HepG2 (cell line): ENCODE measurements at regions of chr5 and their contacts with region 1.

Region 1: DNA sequence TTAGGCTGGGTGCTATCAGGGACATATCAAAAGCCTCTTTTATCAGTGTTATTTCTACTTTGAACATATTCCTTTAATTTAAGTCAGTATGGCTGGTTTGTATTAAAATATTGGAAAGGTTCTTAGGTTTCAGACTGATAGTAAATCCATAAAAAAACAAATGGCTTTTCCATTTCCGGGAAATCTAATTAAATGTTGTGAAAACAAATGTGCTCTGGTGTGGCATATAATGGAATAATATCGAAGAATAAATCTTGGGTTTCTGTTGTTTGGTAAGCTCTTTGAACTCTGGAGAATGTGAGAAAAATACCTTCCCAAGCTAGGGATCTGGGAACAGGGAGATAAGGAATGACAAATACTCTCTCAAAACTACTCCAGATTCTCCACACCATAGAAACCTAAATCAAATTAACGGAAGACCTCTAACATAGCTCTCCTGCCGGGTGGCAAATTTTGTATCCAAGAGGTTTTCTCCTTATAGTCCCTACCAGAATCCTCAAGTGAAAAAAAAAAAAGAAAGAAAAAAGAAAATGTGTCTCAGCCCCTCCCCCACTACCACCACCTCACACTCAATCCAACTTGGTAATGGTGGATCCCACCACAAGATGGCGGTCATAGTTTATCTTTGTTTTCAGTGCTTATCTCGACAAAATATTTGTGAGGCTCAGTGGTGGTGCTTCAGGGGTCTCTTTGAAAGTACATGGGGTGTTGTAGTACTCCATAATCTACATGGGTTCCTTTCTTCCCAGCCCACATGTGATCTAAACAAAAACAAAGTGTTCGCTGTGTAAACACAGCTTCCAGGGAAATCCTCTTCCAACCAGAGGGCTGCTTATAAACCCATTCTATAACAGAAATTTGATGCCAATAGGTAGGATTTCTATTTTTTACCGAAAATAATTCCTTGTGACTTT is 54.6 kb upstream of the FST start:
- DNase-seq: peak; percentile 67
- ATAC-seq: peak; percentile 89
- H3K4me3 ChIP-seq: peak overlapping the region in 1 of 3 experiments; percentile 9; a peak in 1 of 6 replicates
- H3K27ac ChIP-seq: no peak overlapping the region
- H3K4me1 ChIP-seq: peaks cover 33% of the 10 kb centered on the region
- H3K27me3 ChIP-seq: no peaks in the 10 kb centered on the region
- CTCF ChIP-seq: peak; percentile 86
- EP300 ChIP-seq: no peak
- POLR2A ChIP-seq: no peak
- RAD21 ChIP-seq: peak; percentile 68; the same call in 1 of the 2 replicates

Region 2: GRCh38 chr5:52043543-52043942 is 1382.3 kb before region 1 on chr5:
- CTCF ChIA-PET with region 1: no interaction called
- POLR2A ChIA-PET with region 1: no interaction called
- in situ Hi-C with region 1: no loop called
- intact Hi-C with region 1: no loop called
- DNase-seq: no peak
- ATAC-seq: no peak
- H3K4me3 ChIP-seq: no peak overlapping the region
- H3K27ac ChIP-seq: no peak overlapping the region
- H3K4me1 ChIP-seq: no peaks in the 10 kb centered on the region
- H3K27me3 ChIP-seq: no peaks in the 10 kb centered on the region
- CTCF ChIP-seq: no peak
- EP300 ChIP-seq: no peak
- POLR2A ChIP-seq: no peak
- RAD21 ChIP-seq: no peak

Region 3: GRCh38 chr5:52787600-52788504 is 638.0 kb before region 1 on chr5 and contains the starts of genes ITGA1 and PELO:
- CTCF ChIA-PET with region 1: no interaction called
- POLR2A ChIA-PET with region 1: no interaction called
- in situ Hi-C with region 1: no loop called
- intact Hi-C with region 1: no loop called
- DNase-seq: peak; percentile 86
- ATAC-seq: peak; percentile 92
- H3K4me3 ChIP-seq: peak within 1 kb of the TSS; percentile 76 to 92 (median 77)
- H3K27ac ChIP-seq: peak within 1 kb of the TSS; percentile 73
- H3K4me1 ChIP-seq: peaks cover 48% of the 10 kb centered on the region
- H3K27me3 ChIP-seq: no peaks in the 10 kb centered on the region; a peak in 1 of 5 replicates
- CTCF ChIP-seq: peak; percentile 86
- EP300 ChIP-seq: no peak; a peak in 1 of 4 replicates
- POLR2A ChIP-seq: peak; percentile 35 to 61; a peak in 3 of 4 replicates
- RAD21 ChIP-seq: peak; percentile 90
- total RNA-seq, gene ITGA1: 11.6 and 23.1 TPM in 2 replicates
- total RNA-seq, gene PELO: 19.0 and 19.5 TPM in 2 replicates

Region 4: GRCh38 chr5:53170748-53171349 is 255.0 kb before region 1 on chr5:
- CTCF ChIA-PET with region 1: no interaction called
- POLR2A ChIA-PET with region 1: no interaction called
- in situ Hi-C with region 1: no loop called
- intact Hi-C with region 1: loop called (anchors 5 kb)
- DNase-seq: peak; percentile 23
- ATAC-seq: peak; percentile 72
- H3K4me3 ChIP-seq: no peak overlapping the region
- H3K27ac ChIP-seq: no peak overlapping the region
- H3K4me1 ChIP-seq: no peaks in the 10 kb centered on the region
- H3K27me3 ChIP-seq: no peaks in the 10 kb centered on the region; a peak in 2 of 5 replicates
- CTCF ChIP-seq: peak; percentile 74
- EP300 ChIP-seq: no peak
- POLR2A ChIP-seq: no peak
- RAD21 ChIP-seq: peak; percentile 38; the same call in 1 of the 2 replicates

Region 5: GRCh38 chr5:53478411-53479044 is 52.7 kb after region 1 on chr5:
- CTCF ChIA-PET with region 1: no interaction called
- POLR2A ChIA-PET with region 1: interaction called, 12 read pairs
- in situ Hi-C with region 1: no loop called
- intact Hi-C with region 1: loop called (anchors 1 kb)
- DNase-seq: peak; percentile 79
- ATAC-seq: peak; percentile 4
- H3K4me3 ChIP-seq: peak overlapping the region; percentile 65 to 95 (median 84)
- H3K27ac ChIP-seq: peak overlapping the region; percentile 98
- H3K4me1 ChIP-seq: peaks cover 55% of the 10 kb centered on the region
- H3K27me3 ChIP-seq: peaks cover 0 to 5% of the 10 kb centered on the region in 2 experiments; a peak in 1 of 5 replicates
- CTCF ChIP-seq: peak; percentile 74
- EP300 ChIP-seq: peak in 1 of 2 experiments; percentile 48; a peak in 1 of 4 replicates
- POLR2A ChIP-seq: peak; percentile 48 to 64
- RAD21 ChIP-seq: peak; percentile 35; the same call in 1 of the 2 replicates

Region 6: GRCh38 chr5:53874409-53874808 is 448.6 kb after region 1 on chr5:
- CTCF ChIA-PET with region 1: interaction called, 3 read pairs
- POLR2A ChIA-PET with region 1: no interaction called
- in situ Hi-C with region 1: no loop called
- intact Hi-C with region 1: loop called (anchors 1 kb)
- DNase-seq: no peak
- ATAC-seq: peak; percentile 91
- H3K4me3 ChIP-seq: no peak overlapping the region
- H3K27ac ChIP-seq: no peak overlapping the region
- H3K4me1 ChIP-seq: peaks cover 12% of the 10 kb centered on the region
- H3K27me3 ChIP-seq: no peaks in the 10 kb centered on the region
- CTCF ChIP-seq: no peak
- EP300 ChIP-seq: no peak
- POLR2A ChIP-seq: no peak
- RAD21 ChIP-seq: no peak

Region 7: DNA sequence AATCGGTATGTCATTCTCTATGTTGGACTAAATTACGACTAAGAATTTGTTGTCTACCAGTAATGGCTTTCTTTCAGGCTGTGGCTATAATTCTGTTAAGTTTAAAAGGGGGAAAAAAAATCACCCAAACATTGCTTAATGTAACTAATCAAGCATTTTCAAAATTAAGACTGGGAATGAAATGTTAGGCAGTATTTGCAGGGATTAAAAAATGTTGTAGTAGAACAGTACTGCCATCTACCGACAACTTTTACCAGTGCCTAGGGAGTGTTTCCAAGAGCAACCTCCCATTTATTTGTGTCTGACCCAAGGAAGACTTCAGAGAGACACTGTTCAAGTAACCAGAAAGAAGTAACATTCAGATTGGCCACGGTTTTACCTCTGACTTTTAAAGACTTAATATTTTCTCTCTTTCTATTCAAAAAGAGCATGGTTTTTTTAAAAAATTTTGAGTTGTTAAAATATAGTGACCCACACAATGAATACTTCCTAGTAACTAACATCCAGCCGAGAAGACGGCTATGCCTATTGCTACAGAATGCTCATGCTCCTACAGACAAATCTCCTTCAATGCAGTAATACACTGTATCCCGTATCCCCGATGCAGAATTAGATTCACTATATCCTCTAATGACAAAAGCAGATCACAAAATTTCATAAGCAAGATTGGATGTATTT is 792.1 kb after region 1 on chr5:
- CTCF ChIA-PET with region 1: interaction called, 9 read pairs
- POLR2A ChIA-PET with region 1: no interaction called
- in situ Hi-C with region 1: loop called (anchors 5 kb)
- intact Hi-C with region 1: loop called (anchors 1 kb)
- DNase-seq: peak; percentile 37
- ATAC-seq: peak; percentile 72
- H3K4me3 ChIP-seq: no peak overlapping the region
- H3K27ac ChIP-seq: no peak overlapping the region
- H3K4me1 ChIP-seq: no peaks in the 10 kb centered on the region
- H3K27me3 ChIP-seq: no peaks in the 10 kb centered on the region; a peak in 1 of 5 replicates
- CTCF ChIP-seq: peak; percentile 76
- EP300 ChIP-seq: no peak
- POLR2A ChIP-seq: no peak
- RAD21 ChIP-seq: 0 out of 2 replicates have a peak, but pooled peaks have one; percentile 43

Region 8: DNA sequence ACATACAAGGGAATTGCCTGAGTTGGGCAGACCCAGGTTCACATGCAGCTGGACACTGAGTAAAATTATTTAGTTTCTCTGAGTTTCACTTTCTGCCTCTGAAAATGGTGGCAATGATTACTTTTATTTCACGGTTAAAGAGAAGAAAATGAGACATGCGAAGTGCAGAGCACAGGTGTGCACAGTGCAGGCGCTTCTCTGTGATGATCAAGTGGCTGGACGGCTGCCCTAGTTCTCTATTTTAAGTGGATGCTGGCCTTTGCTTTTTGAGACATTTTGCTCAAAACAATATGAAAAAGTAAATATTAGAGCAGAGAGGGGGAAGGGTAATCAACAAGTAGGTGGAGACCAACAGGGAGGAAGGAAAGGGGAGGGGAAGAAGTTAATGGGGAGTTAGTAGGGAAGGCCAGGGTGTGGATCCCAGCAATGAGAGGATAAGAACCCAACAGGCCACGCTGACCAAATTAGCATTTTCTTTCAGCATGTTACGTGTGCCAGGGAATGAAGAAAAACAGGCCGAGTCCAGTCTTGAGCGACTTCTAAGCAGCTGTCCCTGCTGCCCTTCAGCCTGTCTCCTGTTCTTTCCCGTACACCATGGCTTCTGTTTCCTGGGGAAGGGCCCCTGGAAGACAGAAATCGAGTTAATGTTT is 1107.8 kb after region 1 on chr5:
- CTCF ChIA-PET with region 1: no interaction called
- POLR2A ChIA-PET with region 1: no interaction called
- in situ Hi-C with region 1: no loop called
- intact Hi-C with region 1: no loop called
- DNase-seq: no peak
- ATAC-seq: no peak
- H3K4me3 ChIP-seq: no peak overlapping the region
- H3K27ac ChIP-seq: no peak overlapping the region
- H3K4me1 ChIP-seq: peaks cover 14% of the 10 kb centered on the region
- H3K27me3 ChIP-seq: no peaks in the 10 kb centered on the region
- CTCF ChIP-seq: no peak
- EP300 ChIP-seq: no peak
- POLR2A ChIP-seq: no peak
- RAD21 ChIP-seq: no peak